ENCODE measurements at regions of chr10 and their contacts with region 1.

Region 1: GRCh38 chr10:62831346-62831745 is 15.2 kb upstream of the EGR2 start:
- DNase-seq: no peak
- H3K4me3 ChIP-seq: no peak overlapping the region
- H3K27ac ChIP-seq: no peak overlapping the region
- H3K4me1 ChIP-seq: no peaks in the 10 kb centered on the region
- H3K27me3 ChIP-seq: no peaks in the 10 kb centered on the region
- CTCF ChIP-seq: no peak
- EP300 ChIP-seq: no peak
- POLR2A ChIP-seq: no peak

Region 2: DNA sequence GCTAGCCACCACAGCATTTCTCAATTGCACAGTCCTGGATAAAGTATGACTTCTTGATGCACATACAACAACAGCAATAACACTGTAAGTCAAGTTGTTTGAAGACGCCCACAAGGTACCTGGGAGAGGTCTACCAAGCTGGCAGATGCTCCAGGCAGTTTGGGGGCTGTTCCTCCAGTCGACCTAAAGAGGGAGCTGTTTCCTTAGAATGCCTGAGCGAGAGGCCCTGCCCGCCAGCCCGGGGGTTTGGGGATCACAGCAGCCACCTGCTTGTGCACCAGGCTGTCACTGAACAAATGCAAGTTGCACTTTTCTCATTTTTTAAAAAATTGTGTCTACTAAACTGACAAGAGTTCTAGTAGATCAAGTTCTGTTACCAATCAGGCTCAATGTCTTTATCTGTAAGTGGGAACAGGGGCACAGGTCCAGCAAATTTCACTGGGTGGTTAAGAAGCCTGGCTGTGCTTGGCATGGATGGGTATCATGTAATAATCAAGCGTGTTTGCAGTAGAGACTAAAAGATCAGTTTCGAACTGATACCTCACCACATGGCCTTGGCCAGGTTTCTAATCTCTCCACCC is 220.6 kb before region 1 on chr10:
- in situ Hi-C with region 1: loop called in 1 of 4 experiments (anchors 25 kb)
- intact Hi-C with region 1: no loop called
- DNase-seq: peak; percentile 52
- H3K4me3 ChIP-seq: no peak overlapping the region
- H3K27ac ChIP-seq: no peak overlapping the region
- H3K4me1 ChIP-seq: no peaks in the 10 kb centered on the region
- H3K27me3 ChIP-seq: no peaks in the 10 kb centered on the region
- CTCF ChIP-seq: peak; percentile 20 to 50 (median 48)
- EP300 ChIP-seq: no peak
- POLR2A ChIP-seq: no peak

Region 3: GRCh38 chr10:62779487-62780248 is 51.7 kb before region 1 on chr10:
- in situ Hi-C with region 1: no loop called
- intact Hi-C with region 1: no loop called
- DNase-seq: peak; percentile 61
- H3K4me3 ChIP-seq: no peak overlapping the region
- H3K27ac ChIP-seq: no peak overlapping the region
- H3K4me1 ChIP-seq: no peaks in the 10 kb centered on the region
- H3K27me3 ChIP-seq: no peaks in the 10 kb centered on the region
- CTCF ChIP-seq: no peak
- EP300 ChIP-seq: no peak
- POLR2A ChIP-seq: no peak